ENCODE measurements at regions of chr3 and their contacts with region 1.

Region 1: GRCh38 chr3:142993958-142994442 is 7.4 kb upstream of the U2SURP start:
- DNase-seq: peak; percentile 38 to 44
- ATAC-seq: peak in 4 of 8 donors; percentile 34 to 62 (median 52)
- H3K4me3 ChIP-seq: no peak overlapping the region
- H3K27ac ChIP-seq: no peak overlapping the region
- H3K4me1 ChIP-seq: peaks cover 0 to 16% (median 0%) of the 10 kb centered on the region in 9 donors
- H3K27me3 ChIP-seq: no peaks in the 10 kb centered on the region
- CTCF ChIP-seq: peak; percentile 48 to 79 (median 71)

Region 2: DNA sequence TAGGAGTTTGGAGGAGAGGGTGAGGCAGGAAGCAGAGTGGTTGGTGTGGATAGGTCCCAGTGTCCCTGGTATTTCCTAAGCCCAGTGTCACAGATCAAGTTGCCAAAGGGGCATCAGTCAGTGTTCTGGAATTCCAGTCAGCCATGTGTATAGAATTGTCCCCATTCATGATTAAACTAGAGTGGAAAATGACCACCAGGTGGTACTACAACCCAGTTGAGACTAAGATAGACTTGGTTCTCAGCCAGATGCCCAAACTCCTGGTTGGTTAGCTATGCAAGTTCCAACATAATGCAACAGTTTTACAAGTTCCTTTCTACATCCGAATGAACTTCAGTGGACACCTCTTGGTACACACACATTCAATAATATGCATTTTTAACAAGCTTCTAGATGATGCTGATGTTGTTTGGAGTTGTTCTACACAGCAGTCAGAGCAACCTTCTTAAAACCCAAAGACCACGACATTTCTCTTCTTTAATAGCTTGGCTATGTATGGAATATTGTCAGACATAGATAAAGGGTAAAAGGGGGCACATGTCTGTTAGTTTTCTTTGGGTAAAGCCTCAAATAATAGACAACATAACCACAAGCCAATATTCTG is 407.1 kb before region 1 on chr3:
- intact Hi-C with region 1: loop called (anchors 2 to 10 kb)
- DNase-seq: peak in 1 of 2 donors; percentile 40
- ATAC-seq: peak in 7 of 8 donors; percentile 64 to 82 (median 68)
- H3K4me3 ChIP-seq: no peak overlapping the region
- H3K27ac ChIP-seq: no peak overlapping the region
- H3K4me1 ChIP-seq: peaks cover 0 to 6% (median 0%) of the 10 kb centered on the region in 9 donors
- H3K27me3 ChIP-seq: peaks cover 0 to 4% (median 0%) of the 10 kb centered on the region in 7 donors
- CTCF ChIP-seq: peak; percentile 39 to 73 (median 61)

Region 3: GRCh38 chr3:142723968-142724681 is 269.9 kb before region 1 on chr3 and contains the start of gene TRPC1:
- intact Hi-C with region 1: loop called in 1 of 10 experiments (anchors 10 kb)
- DNase-seq: peak; percentile 77 to 78
- ATAC-seq: peak; percentile 89 to 95 (median 94)
- H3K4me3 ChIP-seq: peak within 1 kb of the TSS; percentile 72 to 94 (median 82)
- H3K27ac ChIP-seq: peak within 1 kb of the TSS; percentile 82 to 99 (median 91)
- H3K4me1 ChIP-seq: peaks cover 0 to 29% (median 15%) of the 10 kb centered on the region in 9 donors
- H3K27me3 ChIP-seq: peaks cover 0 to 24% (median 0%) of the 10 kb centered on the region in 7 donors
- CTCF ChIP-seq: no peak
- total RNA-seq, gene TRPC1: 6.3 to 17.6 (median 11.8) TPM

Region 4: GRCh38 chr3:142929109-142929508 is 64.9 kb before region 1 on chr3:
- intact Hi-C with region 1: loop called in 4 of 10 experiments (anchors 5 kb)
- DNase-seq: peak; percentile 21 to 28
- ATAC-seq: peak in 5 of 8 donors; percentile 50 to 73 (median 68)
- H3K4me3 ChIP-seq: no peak overlapping the region
- H3K27ac ChIP-seq: no peak overlapping the region
- H3K4me1 ChIP-seq: peaks cover 0 to 4% (median 0%) of the 10 kb centered on the region in 9 donors
- H3K27me3 ChIP-seq: no peaks in the 10 kb centered on the region
- CTCF ChIP-seq: peak in 7 of 9 donors; percentile 41 to 61 (median 57)

Region 5: GRCh38 chr3:142940000-142940399 is 54.0 kb before region 1 on chr3:
- intact Hi-C with region 1: loop called in 1 of 10 experiments (anchors 2 kb)
- DNase-seq: no peak
- ATAC-seq: no peak
- H3K4me3 ChIP-seq: no peak overlapping the region
- H3K27ac ChIP-seq: no peak overlapping the region
- H3K4me1 ChIP-seq: peaks cover 0 to 8% (median 0%) of the 10 kb centered on the region in 9 donors
- H3K27me3 ChIP-seq: peaks cover 0 to 3% (median 0%) of the 10 kb centered on the region in 7 donors
- CTCF ChIP-seq: no peak

Region 6: GRCh38 chr3:143024351-143024960 is 30.5 kb after region 1 on chr3:
- intact Hi-C with region 1: no loop called
- DNase-seq: no peak
- ATAC-seq: no peak
- H3K4me3 ChIP-seq: no peak overlapping the region
- H3K27ac ChIP-seq: no peak overlapping the region
- H3K4me1 ChIP-seq: no peaks in the 10 kb centered on the region
- H3K27me3 ChIP-seq: no peaks in the 10 kb centered on the region
- CTCF ChIP-seq: no peak

Measured in heart right ventricle (tissue), 16 donors.